WTC11 (cell line): ENCODE measurements at regions of chr19 and their contacts with region 1.

Region 1: GRCh38 chr19:38004521-38005223 is 97.7 kb downstream of the SIPA1L3 start:
- DNase-seq: peak; percentile 71
- ATAC-seq: peak; percentile 87
- H3K4me3 Mint-ChIP-seq: no peak overlapping the region
- H3K27ac Mint-ChIP-seq: no peak overlapping the region
- H3K4me1 Mint-ChIP-seq: peaks cover 4% of the 10 kb centered on the region; the same call in 1 of the 2 replicates
- H3K27me3 Mint-ChIP-seq: no peaks in the 10 kb centered on the region
- CTCF ChIP-seq: no peak

Region 2: GRCh38 chr19:37931881-37932655 is 72.6 kb before region 1 on chr19:
- CTCF ChIA-PET with region 1: interaction called, 14 read pairs
- POLR2A ChIA-PET with region 1: interaction called, 9 read pairs
- DNase-seq: peak; percentile 69
- ATAC-seq: peak; percentile 64
- H3K4me3 Mint-ChIP-seq: peak overlapping the region; percentile 60
- H3K27ac Mint-ChIP-seq: peak overlapping the region; percentile 91
- H3K4me1 Mint-ChIP-seq: peaks cover 60% of the 10 kb centered on the region
- H3K27me3 Mint-ChIP-seq: no peaks in the 10 kb centered on the region; the same call in 1 of the 2 replicates
- CTCF ChIP-seq: no peak

Region 3: DNA sequence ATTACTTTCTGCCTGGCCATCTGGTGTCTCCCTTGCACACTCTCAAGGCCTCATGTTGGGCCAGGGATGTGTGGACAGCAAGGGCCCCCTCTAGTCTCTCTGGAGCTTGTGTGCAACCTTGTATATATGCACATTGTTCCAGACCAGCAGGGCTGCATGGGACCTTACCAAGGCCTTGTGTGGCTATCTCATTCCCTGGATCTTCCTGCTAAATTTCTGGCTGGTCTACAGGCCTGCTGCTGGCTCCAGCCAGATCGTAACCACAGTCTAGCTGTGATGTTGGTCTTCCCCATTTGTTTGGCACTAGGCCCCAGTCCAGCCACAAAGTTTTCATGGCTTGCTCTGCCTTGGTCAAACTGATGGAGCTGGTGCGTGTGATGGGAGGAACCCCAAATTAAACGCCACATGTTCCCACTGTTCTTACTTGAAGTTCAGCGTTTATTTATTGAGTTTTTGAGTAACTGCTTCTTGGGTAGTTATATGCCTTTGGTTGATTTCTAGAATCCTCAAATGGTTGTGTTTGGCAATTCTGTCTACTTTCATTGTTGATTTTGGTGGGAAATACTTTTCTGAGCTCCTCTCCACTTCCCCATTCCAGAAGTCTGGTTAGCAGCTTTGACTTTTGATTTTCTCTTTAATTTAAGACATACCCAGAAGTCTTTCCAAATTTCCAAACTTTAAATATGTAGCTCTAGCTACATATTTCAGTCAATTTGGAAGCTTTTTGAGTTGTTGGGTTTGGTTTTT is 41.3 kb before region 1 on chr19:
- CTCF ChIA-PET with region 1: no interaction called
- POLR2A ChIA-PET with region 1: no interaction called
- DNase-seq: no peak
- ATAC-seq: no peak
- H3K4me3 Mint-ChIP-seq: no peak overlapping the region
- H3K27ac Mint-ChIP-seq: peak overlapping the region; percentile 52; the same call in 1 of the 2 replicates
- H3K4me1 Mint-ChIP-seq: peaks cover 11% of the 10 kb centered on the region
- H3K27me3 Mint-ChIP-seq: no peaks in the 10 kb centered on the region
- CTCF ChIP-seq: no peak

Region 4: DNA sequence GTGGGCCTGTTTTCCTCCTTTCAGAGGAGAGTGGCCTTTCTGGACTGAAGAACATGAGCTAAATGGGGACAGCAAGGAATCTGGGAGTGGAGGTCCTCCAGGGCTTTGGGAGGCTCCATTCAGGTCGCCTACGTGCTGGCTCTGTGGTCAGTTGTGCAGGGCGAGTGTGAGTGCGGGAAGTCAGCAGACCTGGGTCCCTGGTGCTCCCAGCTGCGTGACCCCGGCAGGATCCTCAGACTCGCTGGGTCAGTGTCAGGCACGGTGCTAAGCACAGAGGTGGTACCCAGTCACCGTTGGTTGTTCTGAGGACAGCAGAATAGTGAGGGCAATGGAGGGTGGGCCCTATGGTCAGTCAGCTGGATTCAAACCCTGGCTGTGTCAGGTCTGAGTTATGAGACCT is 11.9 kb before region 1 on chr19:
- CTCF ChIA-PET with region 1: interaction called, 41 read pairs
- POLR2A ChIA-PET with region 1: interaction called, 28 read pairs
- DNase-seq: no peak
- ATAC-seq: no peak
- H3K4me3 Mint-ChIP-seq: no peak overlapping the region
- H3K27ac Mint-ChIP-seq: no peak overlapping the region
- H3K4me1 Mint-ChIP-seq: peaks cover 46% of the 10 kb centered on the region
- H3K27me3 Mint-ChIP-seq: no peaks in the 10 kb centered on the region
- CTCF ChIP-seq: no peak